A673 (cell line): ENCODE measurements at regions of chr5 and their contacts with region 1.

Region 1: GRCh38 chr5:141557681-141558136 is 61.1 kb downstream of the DIAPH1 start:
- DNase-seq: peak; percentile 95
- H3K4me3 ChIP-seq: no peak overlapping the region
- H3K27ac ChIP-seq: peak overlapping the region; percentile 98
- H3K4me1 ChIP-seq: peaks cover 40% of the 10 kb centered on the region
- H3K27me3 ChIP-seq: no peaks in the 10 kb centered on the region
- CTCF ChIP-seq: peak; percentile 88

Region 2: GRCh38 chr5:141084487-141084990 is 473.2 kb before region 1 on chr5:
- CTCF ChIA-PET with region 1: interaction called, 8 read pairs
- POLR2A ChIA-PET with region 1: no interaction called
- intact Hi-C with region 1: loop called (anchors 1 kb)
- DNase-seq: peak; percentile 91
- H3K4me3 ChIP-seq: peak overlapping the region; percentile 55
- H3K27ac ChIP-seq: peak overlapping the region; percentile 86
- H3K4me1 ChIP-seq: peaks cover 11% of the 10 kb centered on the region
- H3K27me3 ChIP-seq: no peaks in the 10 kb centered on the region
- CTCF ChIP-seq: peak; percentile 85

Region 3: DNA sequence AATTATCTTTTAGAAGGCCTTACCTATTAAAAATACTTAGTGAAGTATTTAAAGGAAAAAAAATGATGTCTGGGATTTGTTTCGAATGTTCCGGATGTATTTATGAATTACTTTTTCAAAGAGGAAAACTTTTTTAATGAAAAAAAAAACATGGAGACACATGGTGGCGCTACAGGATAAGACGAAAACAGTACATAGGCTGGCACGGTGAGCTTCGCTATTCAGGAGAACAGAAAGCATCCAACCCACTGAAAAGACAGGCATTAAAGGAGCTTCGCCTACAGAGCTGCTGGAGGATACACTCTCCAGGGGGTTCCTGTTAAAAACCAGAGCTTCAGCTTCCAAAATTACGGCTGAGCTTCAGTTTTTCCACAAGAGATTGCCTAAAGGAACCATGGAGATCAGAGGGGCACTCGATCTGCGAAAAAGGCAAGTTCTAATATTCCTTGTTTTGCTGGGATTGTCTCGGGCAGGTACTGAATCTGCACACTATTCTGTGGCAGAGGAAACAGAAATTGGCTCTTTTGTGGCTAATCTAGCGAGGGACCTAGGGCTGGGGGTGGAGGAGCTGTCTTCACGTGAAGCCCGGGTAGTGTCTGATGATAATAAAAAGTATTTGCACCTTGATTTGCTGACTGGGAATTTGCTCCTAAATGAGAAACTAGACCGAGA is 334.5 kb before region 1 on chr5 and contains the start of gene PCDHB14:
- CTCF ChIA-PET with region 1: interaction called, 24 read pairs
- POLR2A ChIA-PET with region 1: no interaction called
- intact Hi-C with region 1: loop called (anchors 2 kb)
- DNase-seq: peak; percentile 95
- H3K4me3 ChIP-seq: peak within 1 kb of the TSS; percentile 44
- H3K27ac ChIP-seq: peak within 1 kb of the TSS; percentile 64
- H3K4me1 ChIP-seq: no peaks in the 10 kb centered on the region
- H3K27me3 ChIP-seq: no peaks in the 10 kb centered on the region
- CTCF ChIP-seq: peak; percentile 67
- total RNA-seq, gene PCDHB14: 6.9 and 7.4 TPM in 2 replicates

Region 4: GRCh38 chr5:141349917-141350619 is 207.6 kb before region 1 on chr5 and contains the start of gene PCDHGB1:
- CTCF ChIA-PET with region 1: interaction called, 12 read pairs
- POLR2A ChIA-PET with region 1: no interaction called
- intact Hi-C with region 1: loop called (anchors 5 kb)
- DNase-seq: peak; percentile 87
- H3K4me3 ChIP-seq: peak within 1 kb of the TSS; percentile 24
- H3K27ac ChIP-seq: peak within 1 kb of the TSS; percentile 12
- H3K4me1 ChIP-seq: no peaks in the 10 kb centered on the region
- H3K27me3 ChIP-seq: no peaks in the 10 kb centered on the region
- CTCF ChIP-seq: peak; percentile 76
- total RNA-seq, gene PCDHGB1: 7.6 TPM in 2 replicates

Region 5: DNA sequence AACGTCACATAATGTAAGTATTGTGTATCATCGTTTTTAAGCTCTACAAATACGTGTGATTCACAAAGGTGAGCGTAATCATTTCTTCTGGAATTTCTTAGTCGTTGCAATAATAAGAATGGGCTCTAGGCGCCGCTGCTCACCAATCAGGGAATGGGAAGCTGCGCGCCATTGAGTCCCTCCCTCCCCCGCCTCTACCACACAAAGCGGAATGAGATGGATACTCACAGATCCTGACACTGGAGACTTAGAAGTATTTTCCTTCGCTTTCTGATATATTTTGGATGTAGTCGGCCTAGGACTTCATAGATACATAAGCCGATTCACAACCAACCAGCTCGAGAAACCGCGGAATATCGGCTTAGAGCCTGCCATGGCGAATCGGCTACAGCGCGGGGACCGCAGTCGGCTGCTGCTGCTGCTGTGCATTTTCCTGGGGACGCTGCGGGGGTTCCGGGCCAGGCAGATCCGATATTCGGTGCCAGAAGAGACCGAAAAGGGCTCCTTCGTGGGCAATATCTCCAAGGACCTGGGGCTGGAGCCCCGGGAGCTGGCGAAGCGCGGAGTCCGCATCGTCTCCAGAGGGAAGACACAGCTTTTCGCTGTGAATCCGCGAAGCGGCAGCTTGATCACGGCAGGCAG is 136.7 kb before region 1 on chr5 and contains the start of gene PCDHGA11:
- CTCF ChIA-PET with region 1: interaction called, 11 read pairs
- POLR2A ChIA-PET with region 1: no interaction called
- intact Hi-C with region 1: loop called (anchors 1 kb)
- DNase-seq: peak; percentile 85
- H3K4me3 ChIP-seq: peak within 1 kb of the TSS; percentile 53
- H3K27ac ChIP-seq: peak within 1 kb of the TSS; percentile 77
- H3K4me1 ChIP-seq: no peaks in the 10 kb centered on the region
- H3K27me3 ChIP-seq: no peaks in the 10 kb centered on the region
- CTCF ChIP-seq: peak; percentile 69
- total RNA-seq, gene PCDHGA11: 34.9 and 35.5 TPM in 2 replicates